ENCODE measurements at regions of chr6 and their contacts with region 1.

Region 1: GRCh38 chr6:113414511-113414910 is 442.6 kb upstream of the MARCKS start:
- DNase-seq: peak; percentile 30 to 33
- ATAC-seq: peak; percentile 66

Region 2: GRCh38 chr6:113208726-113209125 is 205.8 kb before region 1 on chr6:
- intact Hi-C with region 1: no loop called
- DNase-seq: no peak
- ATAC-seq: no peak

Region 3: DNA sequence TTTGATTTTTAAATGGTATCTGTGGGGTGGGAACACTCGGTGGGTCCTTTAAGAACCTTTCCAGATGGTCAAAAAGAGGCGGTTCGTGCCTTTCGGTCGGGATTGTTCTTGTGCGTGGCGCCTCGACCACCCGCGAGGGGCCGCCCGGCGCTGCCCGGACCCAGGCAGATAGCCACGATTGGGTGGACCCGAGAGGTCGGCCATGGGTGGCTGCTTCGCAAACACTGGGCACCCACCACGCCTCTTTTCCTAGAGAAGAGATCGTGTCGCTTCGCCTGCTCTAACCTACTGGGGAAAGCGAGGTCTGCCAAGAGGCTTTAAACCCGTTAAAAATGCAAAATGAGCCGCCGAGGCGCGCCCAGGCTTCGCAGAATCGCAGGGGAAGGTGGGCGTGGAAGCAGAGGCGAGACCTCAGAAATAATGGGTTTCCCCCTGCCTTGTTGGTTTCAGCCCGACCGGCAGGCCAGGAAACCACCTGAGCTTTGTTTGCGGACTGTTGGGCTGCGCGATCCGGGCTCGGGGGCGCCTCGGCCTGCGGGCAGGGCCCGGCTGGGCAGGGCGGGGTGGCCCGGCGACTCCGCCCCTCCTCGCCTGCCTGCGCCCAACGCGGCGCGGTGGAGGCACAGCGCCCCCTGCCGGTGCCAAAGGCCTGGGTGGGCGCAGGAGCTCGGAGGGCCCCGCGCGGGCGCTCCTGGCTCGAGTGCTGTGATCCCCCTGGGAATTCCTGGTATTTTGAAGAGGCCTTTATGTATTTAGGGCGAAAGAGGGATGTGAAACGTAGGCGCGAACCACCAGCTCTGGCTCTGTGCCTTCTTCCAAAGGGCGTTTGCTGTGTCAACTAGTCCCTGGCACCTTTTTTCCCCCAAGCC is 444.2 kb after region 1 on chr6:
- intact Hi-C with region 1: loop called in 1 of 2 experiments (anchors 5 kb)
- DNase-seq: peak; percentile 91 to 93
- ATAC-seq: peak; percentile 72

Measured in left colon (tissue), 2 donors.